Naive thymus-derived CD4-positive, alpha-beta T cell (primary cell): ENCODE measurements at regions of chr5 and their contacts with region 1.

Region 1: DNA sequence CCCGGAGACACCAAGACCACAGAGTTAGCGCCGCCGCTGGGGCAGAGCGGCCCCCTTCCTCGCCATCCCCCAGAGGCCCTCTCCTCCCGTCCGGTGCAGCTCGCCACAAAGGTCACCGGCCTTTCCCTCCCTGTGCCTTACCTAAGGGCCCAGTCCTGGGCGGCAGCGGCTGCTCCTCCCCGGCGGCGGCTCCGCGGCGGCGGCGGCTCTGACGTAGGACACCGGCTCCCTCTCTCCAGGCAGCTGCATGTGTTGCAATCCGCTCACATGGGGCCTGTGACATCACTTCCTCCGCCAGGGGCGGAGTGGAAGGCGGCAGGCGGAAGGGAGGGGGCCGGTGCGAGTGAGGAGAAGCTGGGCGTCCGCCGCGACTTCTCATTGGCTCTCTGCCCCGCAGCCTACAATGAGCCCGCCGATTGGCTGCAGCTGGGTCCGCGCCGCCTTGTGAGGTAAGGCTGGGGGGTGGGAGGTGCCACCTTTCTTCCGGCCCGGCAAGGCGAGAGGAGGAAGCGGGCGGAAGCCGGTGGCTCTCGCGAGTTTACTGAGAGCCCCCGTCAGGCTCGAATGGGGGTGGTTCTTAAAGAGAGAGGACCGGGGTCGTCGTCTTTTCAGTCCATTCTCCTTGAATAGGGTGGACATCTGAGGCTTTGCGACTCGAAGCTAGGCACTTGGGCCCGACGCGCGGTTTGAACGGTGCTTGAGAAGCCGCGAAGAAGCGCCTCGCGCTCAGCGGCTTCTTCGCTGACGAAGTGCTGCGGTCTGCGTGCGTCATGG is at the start of gene ETF1:
- DNase-seq: peak; percentile 95 to 100 (median 100)
- ATAC-seq: peak; percentile 95
- H3K4me3 ChIP-seq: peak within 1 kb of the TSS; percentile 87
- H3K4me3 Mint-ChIP-seq: peak within 1 kb of the TSS; percentile 94 to 100 (median 99)
- H3K27ac ChIP-seq: peak within 1 kb of the TSS; percentile 94
- H3K27ac Mint-ChIP-seq: peak within 1 kb of the TSS; percentile 97 to 100 (median 100)
- H3K4me1 ChIP-seq: peaks cover 36 to 41% of the 10 kb centered on the region in 2 donors
- H3K4me1 Mint-ChIP-seq: peaks cover 55 to 91% (median 73%) of the 10 kb centered on the region in 7 donors
- H3K27me3 ChIP-seq: no peaks in the 10 kb centered on the region
- H3K27me3 Mint-ChIP-seq: no peaks in the 10 kb centered on the region
- total RNA-seq, gene ETF1: 40.6 to 137 (median 84.1) TPM

Region 2: GRCh38 chr5:138178516-138179276 is 364.4 kb before region 1 on chr5 and contains the starts of genes BRD8 and KIF20A:
- CTCF ChIA-PET with region 1: no interaction called
- POLR2A ChIA-PET with region 1: interaction called, 8 read pairs
- intact Hi-C with region 1: loop called (anchors 1 kb)
- DNase-seq: peak; percentile 62 to 89 (median 84)
- ATAC-seq: peak; percentile 92
- H3K4me3 ChIP-seq: peak within 1 kb of the TSS; percentile 85
- H3K4me3 Mint-ChIP-seq: peak within 1 kb of the TSS in 2 of 10 donors; percentile 23 to 51
- H3K27ac ChIP-seq: peak within 1 kb of the TSS; percentile 74
- H3K27ac Mint-ChIP-seq: peak within 1 kb of the TSS in 2 of 9 donors; percentile 38 to 60
- H3K4me1 ChIP-seq: peaks cover 10 to 15% of the 10 kb centered on the region in 2 donors
- H3K4me1 Mint-ChIP-seq: peaks cover 0 to 45% (median 17%) of the 10 kb centered on the region in 7 donors
- H3K27me3 ChIP-seq: no peaks in the 10 kb centered on the region
- H3K27me3 Mint-ChIP-seq: no peaks in the 10 kb centered on the region
- total RNA-seq, gene BRD8: 24.7 to 81.9 (median 66.1) TPM
- total RNA-seq, gene KIF20A: 0.29 to 34.1 TPM in 2 of 5 experiments, not detected in the others

Region 3: GRCh38 chr5:138352071-138352721 is 190.9 kb before region 1 on chr5 and contains the start of gene KDM3B:
- CTCF ChIA-PET with region 1: interaction called, 5 read pairs
- POLR2A ChIA-PET with region 1: interaction called, 10 read pairs
- intact Hi-C with region 1: loop called (anchors 1 kb)
- DNase-seq: peak; percentile 82 to 100 (median 96)
- ATAC-seq: peak; percentile 96
- H3K4me3 ChIP-seq: peak within 1 kb of the TSS; percentile 93
- H3K4me3 Mint-ChIP-seq: peak within 1 kb of the TSS; percentile 88 to 98 (median 96)
- H3K27ac ChIP-seq: peak within 1 kb of the TSS; percentile 91
- H3K27ac Mint-ChIP-seq: peak within 1 kb of the TSS; percentile 90 to 98 (median 96)
- H3K4me1 ChIP-seq: peaks cover 18 to 32% of the 10 kb centered on the region in 2 donors
- H3K4me1 Mint-ChIP-seq: peaks cover 30 to 54% (median 48%) of the 10 kb centered on the region in 7 donors
- H3K27me3 ChIP-seq: no peaks in the 10 kb centered on the region
- H3K27me3 Mint-ChIP-seq: no peaks in the 10 kb centered on the region
- total RNA-seq, gene KDM3B: 67.7 to 90.2 (median 82.8) TPM

Region 4: DNA sequence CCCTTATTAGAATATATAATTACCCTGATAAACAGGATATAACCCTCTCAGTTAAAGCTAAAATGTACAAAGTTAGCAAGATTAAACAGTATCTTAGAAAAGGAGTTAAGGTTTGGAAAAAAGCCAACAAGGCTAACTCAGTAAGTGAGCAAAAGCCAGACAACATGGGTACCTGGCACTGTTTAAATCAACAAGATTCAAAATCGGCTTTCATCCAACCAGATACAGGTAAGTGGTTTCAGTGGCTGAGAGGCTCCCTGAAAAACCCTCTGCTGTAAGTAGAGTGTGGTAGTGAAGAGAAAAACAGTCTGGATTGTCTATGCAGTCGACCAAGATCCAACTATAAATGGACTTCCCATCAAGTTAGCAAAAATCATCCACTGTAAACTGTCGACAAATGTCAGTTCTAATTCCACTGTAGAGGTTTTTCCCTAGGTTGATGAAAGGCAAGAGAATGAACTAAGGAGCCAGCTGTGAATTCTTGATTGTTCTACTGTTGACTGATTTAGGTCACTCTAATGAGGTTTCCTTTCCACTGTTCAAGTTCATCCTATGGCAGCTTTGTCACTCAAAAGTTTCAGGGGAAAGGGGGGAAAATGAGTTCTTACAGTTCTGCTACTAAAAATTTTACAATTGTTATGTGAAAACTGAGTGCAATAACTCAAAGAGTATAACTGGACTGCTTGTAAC is 27.4 kb before region 1 on chr5:
- CTCF ChIA-PET with region 1: no interaction called
- POLR2A ChIA-PET with region 1: no interaction called
- intact Hi-C with region 1: no loop called
- DNase-seq: no peak
- ATAC-seq: no peak
- H3K4me3 ChIP-seq: no peak overlapping the region
- H3K4me3 Mint-ChIP-seq: no peak overlapping the region
- H3K27ac ChIP-seq: no peak overlapping the region
- H3K27ac Mint-ChIP-seq: peak overlapping the region in 1 of 9 donors; percentile 9
- H3K4me1 ChIP-seq: no peaks in the 10 kb centered on the region
- H3K4me1 Mint-ChIP-seq: peaks cover 4 to 11% (median 6%) of the 10 kb centered on the region in 7 donors
- H3K27me3 ChIP-seq: no peaks in the 10 kb centered on the region
- H3K27me3 Mint-ChIP-seq: no peaks in the 10 kb centered on the region

Region 5: GRCh38 chr5:138557677-138558076 is 14.5 kb after region 1 on chr5:
- CTCF ChIA-PET with region 1: interaction called, 4 read pairs
- POLR2A ChIA-PET with region 1: interaction called, 16 read pairs
- intact Hi-C with region 1: loop called in 1 of 2 experiments (anchors 2 kb)
- DNase-seq: no peak
- ATAC-seq: no peak
- H3K4me3 ChIP-seq: no peak overlapping the region
- H3K4me3 Mint-ChIP-seq: no peak overlapping the region
- H3K27ac ChIP-seq: peak overlapping the region; percentile 29
- H3K27ac Mint-ChIP-seq: peak overlapping the region in 2 of 9 donors; percentile 17 to 44
- H3K4me1 ChIP-seq: no peaks in the 10 kb centered on the region
- H3K4me1 Mint-ChIP-seq: peaks cover 0 to 24% (median 17%) of the 10 kb centered on the region in 7 donors
- H3K27me3 ChIP-seq: no peaks in the 10 kb centered on the region
- H3K27me3 Mint-ChIP-seq: no peaks in the 10 kb centered on the region

Region 6: GRCh38 chr5:139293504-139294373 is 750.6 kb after region 1 on chr5 and contains the start of gene MATR3:
- CTCF ChIA-PET with region 1: no interaction called
- POLR2A ChIA-PET with region 1: interaction called, 11 read pairs
- intact Hi-C with region 1: loop called (anchors 1 kb)
- DNase-seq: peak; percentile 83 to 94 (median 91)
- ATAC-seq: peak; percentile 95
- H3K4me3 ChIP-seq: peak within 1 kb of the TSS; percentile 87
- H3K4me3 Mint-ChIP-seq: peak within 1 kb of the TSS; percentile 91 to 99 (median 98)
- H3K27ac ChIP-seq: peak within 1 kb of the TSS; percentile 98
- H3K27ac Mint-ChIP-seq: peak within 1 kb of the TSS; percentile 96 to 100 (median 99)
- H3K4me1 ChIP-seq: peaks cover 29 to 37% of the 10 kb centered on the region in 2 donors
- H3K4me1 Mint-ChIP-seq: peaks cover 33 to 51% (median 42%) of the 10 kb centered on the region in 7 donors
- H3K27me3 ChIP-seq: no peaks in the 10 kb centered on the region
- H3K27me3 Mint-ChIP-seq: no peaks in the 10 kb centered on the region
- total RNA-seq, gene MATR3: 219 to 333 (median 274) TPM

Region 7: GRCh38 chr5:139560752-139561654 is 1017.9 kb after region 1 on chr5 and contains the start of gene UBE2D2:
- CTCF ChIA-PET with region 1: no interaction called
- POLR2A ChIA-PET with region 1: no interaction called
- intact Hi-C with region 1: loop called (anchors 1 to 10 kb)
- DNase-seq: peak; percentile 95 to 98 (median 97)
- ATAC-seq: peak; percentile 94
- H3K4me3 ChIP-seq: peak within 1 kb of the TSS; percentile 85
- H3K4me3 Mint-ChIP-seq: peak within 1 kb of the TSS; percentile 90 to 100 (median 98)
- H3K27ac ChIP-seq: peak within 1 kb of the TSS; percentile 92
- H3K27ac Mint-ChIP-seq: peak within 1 kb of the TSS; percentile 88 to 98 (median 95)
- H3K4me1 ChIP-seq: peaks cover 26 to 36% of the 10 kb centered on the region in 2 donors
- H3K4me1 Mint-ChIP-seq: peaks cover 28 to 39% (median 34%) of the 10 kb centered on the region in 7 donors
- H3K27me3 ChIP-seq: no peaks in the 10 kb centered on the region
- H3K27me3 Mint-ChIP-seq: no peaks in the 10 kb centered on the region
- total RNA-seq, gene UBE2D2: 145 to 214 (median 184) TPM